Activated CD8-positive, alpha-beta T cell treated with anti-CD3 and anti-CD28 coated beads for 36 hours (primary cell): ENCODE measurements at regions of chr2 and their contacts with region 1.

Region 1: DNA sequence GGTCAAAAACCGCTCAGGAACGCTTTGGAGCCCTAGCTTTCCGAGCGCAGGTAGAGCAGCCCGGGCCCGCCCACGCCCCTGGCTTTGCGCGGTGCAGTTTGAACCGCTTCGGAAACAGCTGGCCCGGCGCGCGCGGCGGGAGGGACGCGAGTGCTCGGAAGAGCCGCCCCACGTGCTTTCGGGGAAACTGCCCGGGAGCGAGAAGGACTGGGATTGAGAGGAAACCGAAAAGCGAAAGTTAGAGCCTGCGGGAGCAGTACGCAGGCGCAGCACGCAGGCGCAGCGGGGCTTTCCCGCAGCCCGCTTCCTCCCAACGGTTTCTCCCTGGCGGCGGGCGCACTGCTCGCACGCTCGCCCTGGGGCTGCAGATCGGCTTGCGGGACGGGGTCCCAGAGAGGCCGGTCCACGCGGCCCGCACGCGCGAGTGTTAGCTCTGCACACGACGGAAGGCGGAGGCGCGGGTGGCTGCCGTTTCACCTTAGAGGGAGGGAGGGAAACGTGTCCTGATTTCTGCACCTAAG is 6.3 kb upstream of the STAT1 start:
- DNase-seq: peak; percentile 95
- ATAC-seq: peak; percentile 64
- H3K4me3 Mint-ChIP-seq: no peak overlapping the region
- H3K27ac Mint-ChIP-seq: no peak overlapping the region
- H3K4me1 Mint-ChIP-seq: peaks cover 33% of the 10 kb centered on the region
- H3K27me3 Mint-ChIP-seq: no peaks in the 10 kb centered on the region
- CTCF ChIP-seq: no peak

Region 2: GRCh38 chr2:191006997-191007783 is 13.1 kb before region 1 on chr2:
- CTCF ChIA-PET with region 1: interaction called, 3 read pairs
- POLR2A ChIA-PET with region 1: interaction called, 178 read pairs
- intact Hi-C with region 1: no loop called
- DNase-seq: no peak
- ATAC-seq: no peak
- H3K4me3 Mint-ChIP-seq: no peak overlapping the region
- H3K27ac Mint-ChIP-seq: peak overlapping the region; percentile 41
- H3K4me1 Mint-ChIP-seq: peaks cover 69% of the 10 kb centered on the region
- H3K27me3 Mint-ChIP-seq: no peaks in the 10 kb centered on the region
- CTCF ChIP-seq: no peak

Region 3: GRCh38 chr2:191030521-191031154 is 10.4 kb after region 1 on chr2:
- CTCF ChIA-PET with region 1: interaction called, 8 read pairs
- POLR2A ChIA-PET with region 1: interaction called, 178 read pairs
- intact Hi-C with region 1: no loop called
- DNase-seq: peak; percentile 59
- ATAC-seq: peak; percentile 78
- H3K4me3 Mint-ChIP-seq: no peak overlapping the region
- H3K27ac Mint-ChIP-seq: peak overlapping the region; percentile 66
- H3K4me1 Mint-ChIP-seq: peaks cover 45% of the 10 kb centered on the region
- H3K27me3 Mint-ChIP-seq: no peaks in the 10 kb centered on the region
- CTCF ChIP-seq: peak; percentile 73

Region 4: DNA sequence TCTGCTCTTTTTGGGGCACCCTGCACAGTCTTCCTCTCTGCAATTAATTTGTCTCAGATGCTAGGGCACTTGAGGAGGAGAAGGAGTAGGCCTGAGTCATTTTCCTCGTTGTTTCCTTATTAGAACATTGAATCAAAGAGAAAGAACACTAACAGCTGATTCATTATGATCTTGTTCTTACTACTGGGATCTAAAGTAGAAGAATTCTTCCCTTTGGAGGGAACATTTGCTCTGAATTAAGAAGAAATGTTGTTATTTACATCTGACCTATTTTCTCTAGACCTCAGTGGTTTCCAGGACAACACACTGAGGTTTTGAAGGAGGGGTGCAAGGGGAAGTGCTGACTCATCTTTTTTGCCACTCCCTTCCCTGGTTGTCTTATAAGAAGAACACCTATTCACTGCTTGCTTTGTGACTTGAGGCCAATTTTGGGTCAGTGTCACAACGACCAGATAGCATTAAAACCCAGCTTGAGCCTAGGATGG is 18.0 kb after region 1 on chr2:
- CTCF ChIA-PET with region 1: interaction called, 4 read pairs
- POLR2A ChIA-PET with region 1: interaction called, 11 read pairs
- intact Hi-C with region 1: no loop called
- DNase-seq: peak; percentile 41
- ATAC-seq: peak; percentile 67
- H3K4me3 Mint-ChIP-seq: no peak overlapping the region
- H3K27ac Mint-ChIP-seq: peak overlapping the region; percentile 76
- H3K4me1 Mint-ChIP-seq: peaks cover 29% of the 10 kb centered on the region
- H3K27me3 Mint-ChIP-seq: no peaks in the 10 kb centered on the region
- CTCF ChIP-seq: no peak